Mammary epithelial cell (primary cell): ENCODE measurements at regions of chr9 and their contacts with region 1.

Region 1: DNA sequence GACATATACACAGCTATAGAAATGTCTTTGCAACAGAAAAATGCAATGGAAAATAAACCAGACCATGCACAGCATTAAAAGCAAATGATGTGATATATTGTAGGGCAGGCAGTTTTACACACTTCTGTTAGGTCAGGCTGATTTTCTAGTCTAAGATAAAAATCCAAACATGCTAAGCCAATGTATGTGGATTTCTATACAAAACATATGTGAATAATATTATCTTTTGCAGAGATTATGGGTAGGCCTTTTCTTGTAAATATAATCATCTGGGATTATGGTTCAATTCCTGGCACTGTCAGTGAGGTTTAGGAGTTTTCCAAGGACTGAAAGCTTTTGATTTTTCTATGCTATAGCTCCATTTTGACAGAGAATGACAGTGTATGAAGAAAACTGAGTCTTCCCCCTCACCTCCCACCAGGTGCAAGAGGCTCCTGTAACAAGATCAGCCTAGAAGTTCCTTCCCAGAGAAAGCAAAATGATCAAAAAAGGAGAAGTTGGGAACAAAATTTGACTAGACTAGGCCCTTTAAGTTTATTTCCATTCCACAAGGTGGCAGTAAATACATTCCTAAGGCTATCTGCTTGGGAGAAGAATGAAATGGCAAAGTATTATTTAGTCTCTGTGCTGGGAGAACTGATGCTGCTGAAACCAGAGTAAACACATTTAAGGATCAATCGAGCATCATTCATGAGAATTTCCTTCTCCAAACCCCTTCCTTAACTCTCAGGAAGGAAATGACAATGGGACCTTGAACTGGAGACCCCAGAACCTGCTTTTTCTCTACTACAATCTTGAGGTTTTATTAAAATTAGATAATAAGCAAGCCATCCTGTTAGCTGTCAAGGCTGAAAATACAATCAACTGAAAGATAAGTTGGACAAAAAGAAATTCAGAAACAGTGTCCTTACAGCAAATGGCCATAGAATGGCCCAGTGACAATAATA is 133.0 kb upstream of the TUT7 start:
- DNase-seq: peak; percentile 40
- H3K4me3 ChIP-seq: no peak overlapping the region
- H3K27ac ChIP-seq: no peak overlapping the region
- H3K4me1 ChIP-seq: peaks cover 8% of the 10 kb centered on the region
- H3K27me3 ChIP-seq: no peaks in the 10 kb centered on the region
- CTCF ChIP-seq: peak; percentile 31 to 69

Region 2: DNA sequence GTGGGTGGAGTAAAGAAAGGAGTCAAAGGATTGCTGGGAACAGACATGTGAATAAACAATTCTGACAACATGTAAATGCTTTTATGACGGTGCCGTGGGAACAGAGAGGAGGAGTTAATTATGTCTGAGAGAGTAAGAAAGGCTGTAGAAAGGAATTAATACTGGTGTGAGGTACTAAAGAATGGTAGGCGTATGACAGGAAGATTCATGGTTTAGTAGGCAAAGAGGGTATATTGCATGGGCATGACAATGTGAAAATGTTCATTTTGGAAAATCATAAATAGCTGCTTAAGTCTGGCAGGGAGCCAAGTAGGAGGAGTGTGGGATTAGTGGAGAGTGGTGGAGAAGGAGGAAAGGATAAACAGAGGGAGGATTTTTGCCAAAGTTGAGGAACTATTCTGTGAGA is 526.5 kb before region 1 on chr9:
- CTCF ChIA-PET with region 1: no interaction called
- dilution Hi-C with region 1: no loop called
- in situ Hi-C with region 1: no loop called
- intact Hi-C with region 1: no loop called
- DNase-seq: no peak
- H3K4me3 ChIP-seq: no peak overlapping the region
- H3K27ac ChIP-seq: no peak overlapping the region
- H3K4me1 ChIP-seq: peaks cover 6% of the 10 kb centered on the region
- H3K27me3 ChIP-seq: no peaks in the 10 kb centered on the region
- CTCF ChIP-seq: no peak

Region 3: DNA sequence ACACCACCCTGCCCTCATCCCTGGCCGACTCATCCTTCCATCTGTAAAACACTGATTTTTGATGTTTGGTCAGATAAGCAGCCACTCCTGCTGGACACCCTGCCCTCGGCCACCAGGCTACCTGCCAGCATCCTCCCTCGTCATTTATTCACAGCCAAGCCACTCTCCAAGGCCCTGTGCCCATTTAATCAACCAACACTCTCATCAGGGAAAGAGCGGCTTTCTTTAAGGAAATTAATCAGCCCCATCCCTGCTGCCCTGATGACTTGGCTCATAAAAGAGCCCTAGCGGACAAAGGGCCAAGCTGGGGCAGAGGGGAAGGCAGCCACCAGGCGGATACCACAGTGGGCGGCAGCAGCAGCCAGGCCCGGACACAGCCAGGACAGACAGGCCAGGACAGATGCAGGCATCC is 440.2 kb before region 1 on chr9:
- CTCF ChIA-PET with region 1: no interaction called
- dilution Hi-C with region 1: no loop called
- in situ Hi-C with region 1: no loop called
- intact Hi-C with region 1: no loop called
- DNase-seq: no peak
- H3K4me3 ChIP-seq: no peak overlapping the region
- H3K27ac ChIP-seq: no peak overlapping the region
- H3K4me1 ChIP-seq: no peaks in the 10 kb centered on the region
- H3K27me3 ChIP-seq: no peaks in the 10 kb centered on the region
- CTCF ChIP-seq: no peak

Region 4: DNA sequence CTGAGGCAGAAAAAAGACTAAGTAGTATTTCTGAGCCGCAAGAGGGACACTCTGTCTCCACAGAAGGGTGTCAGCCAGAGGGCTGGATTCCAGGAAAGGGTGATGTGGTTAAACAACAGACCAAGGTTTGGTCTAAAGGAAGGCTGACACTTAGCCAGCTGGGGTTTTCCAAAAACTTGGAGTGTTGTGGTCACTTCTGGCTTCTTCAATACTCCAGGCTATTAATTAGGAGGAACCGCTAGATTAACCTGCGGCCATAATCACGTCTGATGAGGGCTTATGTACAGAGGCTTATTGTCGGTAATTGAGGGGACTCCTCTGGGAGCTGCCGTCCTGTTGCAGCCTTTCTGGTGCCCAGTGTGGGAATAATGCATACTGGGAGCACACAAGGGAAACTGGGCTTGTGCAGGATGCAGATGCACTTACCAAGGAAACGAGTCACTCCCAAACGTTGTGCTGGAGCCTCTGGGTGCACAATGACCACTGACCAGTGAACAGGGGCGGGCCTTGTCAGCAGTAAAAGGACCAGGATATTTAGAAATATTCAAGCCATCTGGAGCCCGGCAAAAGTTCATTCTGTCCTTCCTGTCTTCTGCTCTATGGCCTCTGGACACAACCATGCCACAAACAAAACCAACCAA is 62.8 kb before region 1 on chr9:
- CTCF ChIA-PET with region 1: no interaction called
- dilution Hi-C with region 1: no loop called
- in situ Hi-C with region 1: loop called in 1 of 2 experiments (anchors 10 kb)
- intact Hi-C with region 1: no loop called
- DNase-seq: no peak
- H3K4me3 ChIP-seq: no peak overlapping the region
- H3K27ac ChIP-seq: no peak overlapping the region
- H3K4me1 ChIP-seq: peaks cover 6% of the 10 kb centered on the region
- H3K27me3 ChIP-seq: no peaks in the 10 kb centered on the region
- CTCF ChIP-seq: no peak

Region 5: DNA sequence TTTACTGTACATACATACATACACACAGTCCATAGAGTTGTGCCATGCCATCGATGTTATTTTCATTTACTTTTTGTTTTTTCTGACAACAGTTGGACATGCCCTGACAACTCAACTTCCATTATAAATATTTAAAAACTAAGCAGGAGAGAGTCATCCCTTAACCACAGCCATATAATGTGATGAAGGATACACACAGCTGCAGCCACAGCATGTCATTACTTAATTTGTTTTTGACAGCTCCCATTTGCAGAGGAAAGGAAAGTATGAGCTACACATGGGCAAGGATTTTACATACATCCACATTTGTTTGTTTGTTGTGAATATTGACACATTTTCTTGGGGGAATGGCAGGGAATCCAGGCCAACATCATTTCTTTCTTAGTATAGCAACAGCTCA is 41.5 kb before region 1 on chr9:
- CTCF ChIA-PET with region 1: no interaction called
- dilution Hi-C with region 1: no loop called
- in situ Hi-C with region 1: no loop called
- intact Hi-C with region 1: no loop called
- DNase-seq: peak; percentile 69
- H3K4me3 ChIP-seq: no peak overlapping the region
- H3K27ac ChIP-seq: no peak overlapping the region
- H3K4me1 ChIP-seq: peaks cover 5% of the 10 kb centered on the region
- H3K27me3 ChIP-seq: no peaks in the 10 kb centered on the region
- CTCF ChIP-seq: no peak

Region 6: DNA sequence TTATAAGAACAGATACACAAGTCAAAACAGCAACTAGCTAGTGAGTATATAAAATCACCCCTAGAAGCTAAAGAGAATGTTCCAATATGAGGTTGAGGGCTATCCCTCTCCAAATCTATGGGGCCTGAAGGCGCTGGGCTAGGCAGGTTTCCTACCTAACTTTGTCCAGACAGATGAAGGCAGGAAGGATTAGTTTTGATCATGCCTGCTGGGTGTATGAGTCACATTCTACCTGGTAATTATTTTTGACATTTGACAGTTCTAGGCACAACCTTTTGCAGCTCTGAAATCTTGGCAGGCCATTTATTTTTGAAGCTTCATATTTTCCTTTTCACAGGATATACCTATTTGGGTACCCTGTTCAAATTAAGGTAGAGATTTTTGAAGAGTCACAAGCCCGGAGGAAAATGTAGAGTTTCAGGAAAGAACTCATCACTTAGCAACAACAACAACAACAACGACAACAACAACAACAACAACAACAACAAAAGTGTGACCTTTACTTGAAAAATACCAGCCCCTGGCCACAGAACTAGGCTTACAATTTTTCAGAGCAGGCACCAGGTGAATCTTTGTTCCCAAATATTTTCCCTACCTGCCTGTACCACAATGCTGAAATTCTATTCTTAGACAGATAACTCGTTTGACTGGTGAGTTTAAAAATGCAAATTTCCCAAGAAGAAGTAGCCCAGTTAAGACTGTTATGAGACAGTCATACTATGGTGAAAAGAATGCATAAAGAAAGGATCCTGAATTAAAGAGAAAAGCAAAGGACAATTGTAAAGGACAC is 42.5 kb after region 1 on chr9:
- CTCF ChIA-PET with region 1: no interaction called
- dilution Hi-C with region 1: loop called (anchors 5 kb)
- in situ Hi-C with region 1: no loop called
- intact Hi-C with region 1: no loop called
- DNase-seq: peak; percentile 75
- H3K4me3 ChIP-seq: no peak overlapping the region
- H3K27ac ChIP-seq: no peak overlapping the region
- H3K4me1 ChIP-seq: peaks cover 10% of the 10 kb centered on the region
- H3K27me3 ChIP-seq: peaks cover 4% of the 10 kb centered on the region
- CTCF ChIP-seq: no peak

Region 7: GRCh38 chr9:86626802-86627201 is 139.6 kb after region 1 on chr9:
- CTCF ChIA-PET with region 1: no interaction called
- dilution Hi-C with region 1: no loop called
- in situ Hi-C with region 1: no loop called
- intact Hi-C with region 1: no loop called
- DNase-seq: no peak
- H3K4me3 ChIP-seq: no peak overlapping the region
- H3K27ac ChIP-seq: no peak overlapping the region
- H3K4me1 ChIP-seq: no peaks in the 10 kb centered on the region
- H3K27me3 ChIP-seq: no peaks in the 10 kb centered on the region
- CTCF ChIP-seq: peak in 1 of 2 donors; percentile 3

Region 8: DNA sequence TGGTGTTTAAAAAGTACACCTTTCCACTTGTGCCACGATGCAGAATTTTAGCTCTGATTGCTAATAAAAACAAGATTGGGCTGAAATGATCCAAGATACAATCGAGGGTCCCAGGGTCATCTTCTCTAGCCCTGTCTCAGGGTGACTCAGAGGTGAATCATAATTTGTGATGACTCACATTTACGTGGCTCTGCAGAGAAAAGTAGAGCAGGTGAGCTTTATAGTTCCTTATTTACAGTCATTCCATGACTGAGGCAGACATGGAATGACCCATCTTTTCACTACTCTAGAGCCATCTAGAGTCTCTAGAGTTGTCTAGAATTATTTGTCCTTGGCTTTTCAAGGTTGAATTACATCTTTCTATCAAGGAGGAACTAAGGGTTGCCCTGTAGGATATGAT is 305.0 kb after region 1 on chr9:
- CTCF ChIA-PET with region 1: no interaction called
- dilution Hi-C with region 1: no loop called
- in situ Hi-C with region 1: no loop called
- intact Hi-C with region 1: loop called (anchors 1 kb)
- DNase-seq: peak; percentile 88
- H3K4me3 ChIP-seq: no peak overlapping the region
- H3K27ac ChIP-seq: no peak overlapping the region
- H3K4me1 ChIP-seq: no peaks in the 10 kb centered on the region
- H3K27me3 ChIP-seq: no peaks in the 10 kb centered on the region
- CTCF ChIP-seq: no peak